CD4-positive, alpha-beta memory T cell (primary cell): ENCODE measurements at regions of chr3 and their contacts with region 1.

Region 1: GRCh38 chr3:42880601-42881451 is 5.1 kb upstream of the CYP8B1 start:
- DNase-seq: peak; percentile 83 to 86 (median 85)
- H3K4me3 ChIP-seq: peak overlapping the region in 1 of 2 donors; percentile 74
- H3K4me3 Mint-ChIP-seq: peak overlapping the region; percentile 77 to 89 (median 82)
- H3K27ac ChIP-seq: peak overlapping the region; percentile 56
- H3K27ac Mint-ChIP-seq: peak overlapping the region; percentile 26 to 87 (median 71)
- H3K4me1 ChIP-seq: peaks cover 11% of the 10 kb centered on the region
- H3K4me1 Mint-ChIP-seq: peaks cover 9 to 15% (median 12%) of the 10 kb centered on the region in 4 donors
- H3K27me3 ChIP-seq: no peaks in the 10 kb centered on the region
- H3K27me3 Mint-ChIP-seq: peaks cover 1 to 3% of the 10 kb centered on the region in 2 donors

Region 2: DNA sequence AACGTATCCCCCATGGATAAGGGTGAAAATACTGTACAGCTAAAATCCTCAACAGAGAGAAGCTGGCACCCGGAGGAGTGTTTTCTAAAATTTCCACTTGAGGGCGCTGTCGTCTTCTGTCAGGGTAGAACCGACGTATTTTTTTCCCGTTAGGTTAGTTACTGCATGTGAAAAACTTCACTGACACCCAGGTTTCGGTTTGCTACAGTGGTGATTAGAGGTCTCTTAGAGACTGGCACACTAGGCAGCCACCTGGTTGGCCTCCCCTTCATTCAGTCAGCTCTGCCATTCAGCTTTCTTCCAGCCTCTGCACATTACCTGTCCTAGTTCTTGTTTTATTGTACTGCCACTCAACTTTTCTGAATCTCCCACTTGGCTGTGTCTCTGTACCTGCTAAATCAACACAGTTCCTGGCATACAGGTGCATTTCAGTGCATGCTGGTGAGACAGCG is 633.2 kb before region 1 on chr3:
- CTCF ChIA-PET with region 1: interaction called, 3 read pairs
- POLR2A ChIA-PET with region 1: no interaction called
- intact Hi-C with region 1: loop called (anchors 2 kb)
- DNase-seq: peak; percentile 55 to 64 (median 59)
- H3K4me3 ChIP-seq: no peak overlapping the region
- H3K4me3 Mint-ChIP-seq: peak overlapping the region in 3 of 8 donors; percentile 20 to 56 (median 45)
- H3K27ac ChIP-seq: no peak overlapping the region
- H3K27ac Mint-ChIP-seq: peak overlapping the region in 2 of 7 donors; percentile 14 to 26
- H3K4me1 ChIP-seq: peaks cover 3% of the 10 kb centered on the region
- H3K4me1 Mint-ChIP-seq: peaks cover 4 to 9% (median 7%) of the 10 kb centered on the region in 4 donors
- H3K27me3 ChIP-seq: no peaks in the 10 kb centered on the region
- H3K27me3 Mint-ChIP-seq: peaks cover 6 to 15% of the 10 kb centered on the region in 2 donors

Region 3: GRCh38 chr3:42772670-42773408 is 108.0 kb before region 1 on chr3 and contains the start of gene CCDC13:
- CTCF ChIA-PET with region 1: interaction called, 156 read pairs
- POLR2A ChIA-PET with region 1: no interaction called
- intact Hi-C with region 1: loop called (anchors 2 kb)
- DNase-seq: peak; percentile 78 to 86 (median 80)
- H3K4me3 ChIP-seq: peak within 1 kb of the TSS; percentile 31 to 73
- H3K4me3 Mint-ChIP-seq: peak within 1 kb of the TSS; percentile 82 to 95 (median 91)
- H3K27ac ChIP-seq: peak within 1 kb of the TSS; percentile 19
- H3K27ac Mint-ChIP-seq: peak within 1 kb of the TSS; percentile 83 to 98 (median 94)
- H3K4me1 ChIP-seq: peaks cover 13% of the 10 kb centered on the region
- H3K4me1 Mint-ChIP-seq: peaks cover 5 to 16% (median 10%) of the 10 kb centered on the region in 4 donors
- H3K27me3 ChIP-seq: no peaks in the 10 kb centered on the region
- H3K27me3 Mint-ChIP-seq: no peaks in the 10 kb centered on the region
- total RNA-seq, gene CCDC13: 0.72 to 0.96 TPM

Region 4: DNA sequence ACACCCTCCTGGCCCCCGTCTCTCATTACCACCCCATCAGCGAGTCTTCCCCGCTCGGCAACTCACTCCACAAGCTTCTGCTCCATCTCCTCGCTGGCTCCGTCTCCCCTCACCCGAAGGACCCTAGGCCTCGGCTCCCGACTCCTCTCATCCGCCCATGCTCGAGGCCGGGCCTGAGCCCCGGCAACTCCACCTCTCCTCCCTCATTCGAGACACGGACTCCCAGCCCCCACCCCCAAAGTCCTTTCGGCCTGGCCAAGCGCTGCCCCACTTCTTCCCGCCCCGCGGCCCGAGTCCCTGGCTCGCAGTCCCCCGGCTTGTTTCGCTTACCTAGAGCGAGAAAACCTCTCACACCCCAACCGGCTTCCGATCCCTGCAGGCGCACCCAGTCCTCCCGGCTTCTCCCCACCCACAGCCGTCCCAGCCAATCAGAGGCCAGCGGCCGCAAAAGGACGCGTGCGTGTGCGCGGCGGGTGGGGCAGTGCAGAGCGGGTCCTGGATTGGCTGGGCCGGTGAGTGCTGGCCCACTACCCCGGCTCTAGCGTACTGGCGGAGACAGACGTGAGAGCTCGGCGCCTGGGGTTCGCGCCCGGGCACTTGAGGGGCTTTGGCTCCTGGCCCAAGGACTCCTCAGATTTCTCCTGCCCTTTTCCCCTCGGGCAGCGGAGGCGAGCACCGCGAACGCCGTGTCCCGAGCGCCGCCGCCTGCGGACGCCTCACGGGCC is 76.6 kb before region 1 on chr3 and contains the start of gene HIGD1A:
- CTCF ChIA-PET with region 1: interaction called, 4 read pairs
- POLR2A ChIA-PET with region 1: interaction called, 3 read pairs
- intact Hi-C with region 1: loop called (anchors 2 kb)
- DNase-seq: peak; percentile 90 to 92 (median 91)
- H3K4me3 ChIP-seq: peak within 1 kb of the TSS; percentile 86 to 88
- H3K4me3 Mint-ChIP-seq: peak within 1 kb of the TSS; percentile 94 to 98 (median 96)
- H3K27ac ChIP-seq: peak within 1 kb of the TSS; percentile 81
- H3K27ac Mint-ChIP-seq: peak within 1 kb of the TSS; percentile 91 to 99 (median 96)
- H3K4me1 ChIP-seq: peaks cover 38% of the 10 kb centered on the region
- H3K4me1 Mint-ChIP-seq: peaks cover 24 to 57% (median 37%) of the 10 kb centered on the region in 4 donors
- H3K27me3 ChIP-seq: no peaks in the 10 kb centered on the region
- H3K27me3 Mint-ChIP-seq: peaks cover 6% of the 10 kb centered on the region in 2 donors
- total RNA-seq, gene HIGD1A: 24.3 to 26.7 TPM

Region 5: DNA sequence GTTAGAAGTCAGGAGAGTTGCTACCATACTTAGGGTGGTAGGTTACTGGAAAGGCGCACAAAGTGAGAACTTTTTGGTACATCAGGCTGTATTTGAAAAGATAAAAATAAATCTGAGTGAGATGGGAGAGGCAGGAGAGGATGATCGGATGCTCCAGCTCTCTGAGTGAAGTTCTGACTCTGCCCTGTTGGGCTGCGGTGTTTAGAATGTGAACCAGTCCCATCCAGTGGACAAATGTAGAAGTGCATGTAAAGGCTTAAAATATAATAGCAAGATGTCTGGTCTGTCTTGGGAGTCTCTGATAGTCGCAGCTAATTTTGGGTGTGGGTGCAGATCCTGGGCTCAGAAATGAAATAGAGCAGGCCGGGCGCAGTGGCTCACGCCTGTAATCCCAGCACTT is 41.2 kb before region 1 on chr3:
- CTCF ChIA-PET with region 1: interaction called, 11 read pairs
- POLR2A ChIA-PET with region 1: no interaction called
- intact Hi-C with region 1: no loop called
- DNase-seq: peak; percentile 34 to 52 (median 47)
- H3K4me3 ChIP-seq: no peak overlapping the region
- H3K4me3 Mint-ChIP-seq: no peak overlapping the region
- H3K27ac ChIP-seq: no peak overlapping the region
- H3K27ac Mint-ChIP-seq: no peak overlapping the region
- H3K4me1 ChIP-seq: no peaks in the 10 kb centered on the region
- H3K4me1 Mint-ChIP-seq: no peaks in the 10 kb centered on the region
- H3K27me3 ChIP-seq: no peaks in the 10 kb centered on the region
- H3K27me3 Mint-ChIP-seq: peaks cover 2 to 20% of the 10 kb centered on the region in 2 donors